SK-N-SH (cell line): ENCODE measurements at regions of chr2 and their contacts with region 1.

Region 1: GRCh38 chr2:173075781-173076580 is at the start of gene MAP3K20:
- DNase-seq: peak; percentile 86
- H3K4me3 ChIP-seq: peak within 1 kb of the TSS; percentile 85
- H3K27ac ChIP-seq: peak within 1 kb of the TSS; percentile 85 to 88
- H3K4me1 ChIP-seq: peaks cover 3 to 4% of the 10 kb centered on the region in 2 experiments; a peak in 3 of 4 replicates
- H3K27me3 ChIP-seq: no peaks in the 10 kb centered on the region
- CTCF ChIP-seq: peak; percentile 47
- EP300 ChIP-seq: no peak
- RAD21 ChIP-seq: peak; percentile 42
- polyA plus RNA-seq, gene MAP3K20: 8.5 and 12.2 TPM in 2 replicates

Region 2: DNA sequence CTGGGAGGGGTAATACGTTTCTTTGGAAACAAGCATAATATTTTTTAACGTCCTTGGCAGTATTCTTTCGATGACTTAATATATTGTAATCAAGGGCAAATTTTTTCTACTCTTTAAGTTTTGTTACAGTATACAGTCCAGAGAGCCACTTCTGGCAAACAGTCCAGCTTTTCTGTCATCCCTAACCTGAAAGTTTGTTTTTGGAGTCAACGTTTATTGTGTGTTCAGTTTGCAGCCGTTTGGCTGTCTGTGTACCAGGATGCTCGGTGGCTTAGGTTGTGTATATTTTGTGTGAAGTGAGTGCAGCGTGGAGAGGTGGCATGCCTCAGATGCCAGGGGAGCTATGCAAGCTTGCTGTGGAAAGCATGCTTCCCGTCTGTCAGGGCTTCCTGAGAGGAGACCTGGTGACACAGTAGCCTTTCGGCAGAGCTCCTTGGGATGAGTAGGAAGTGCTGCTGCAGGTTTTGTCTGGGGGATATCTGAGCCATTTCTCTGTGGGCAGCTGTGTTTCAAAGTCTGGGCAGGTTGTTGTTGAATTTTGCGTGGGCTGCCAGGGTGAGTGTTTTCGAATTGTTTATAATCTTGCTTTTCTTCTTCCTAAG is 14.4 kb after region 1 on chr2:
- CTCF ChIA-PET with region 1: interaction called, 13 read pairs
- POLR2A ChIA-PET with region 1: no interaction called
- DNase-seq: no peak
- H3K4me3 ChIP-seq: no peak overlapping the region
- H3K27ac ChIP-seq: peak overlapping the region; percentile 22 to 55; a peak in 2 of 4 replicates
- H3K4me1 ChIP-seq: peaks cover 3 to 10% of the 10 kb centered on the region in 2 experiments; a peak in 3 of 4 replicates
- H3K27me3 ChIP-seq: no peaks in the 10 kb centered on the region
- CTCF ChIP-seq: no peak
- EP300 ChIP-seq: no peak
- RAD21 ChIP-seq: no peak